ENCODE measurements at regions of chr3 and their contacts with region 1.

Region 1: GRCh38 chr3:101195951-101196713 is 124.2 kb downstream of the IMPG2 start:
- DNase-seq: peak; percentile 23
- H3K4me3 ChIP-seq: no peak overlapping the region
- CTCF ChIP-seq: peak; percentile 37

Region 2: GRCh38 chr3:100776746-100777145 is 419.4 kb before region 1 on chr3:
- CTCF ChIA-PET with region 1: interaction called, 11 read pairs
- POLR2A ChIA-PET with region 1: interaction called, 3 read pairs
- DNase-seq: no peak
- H3K4me3 ChIP-seq: no peak overlapping the region
- CTCF ChIP-seq: no peak

Region 3: DNA sequence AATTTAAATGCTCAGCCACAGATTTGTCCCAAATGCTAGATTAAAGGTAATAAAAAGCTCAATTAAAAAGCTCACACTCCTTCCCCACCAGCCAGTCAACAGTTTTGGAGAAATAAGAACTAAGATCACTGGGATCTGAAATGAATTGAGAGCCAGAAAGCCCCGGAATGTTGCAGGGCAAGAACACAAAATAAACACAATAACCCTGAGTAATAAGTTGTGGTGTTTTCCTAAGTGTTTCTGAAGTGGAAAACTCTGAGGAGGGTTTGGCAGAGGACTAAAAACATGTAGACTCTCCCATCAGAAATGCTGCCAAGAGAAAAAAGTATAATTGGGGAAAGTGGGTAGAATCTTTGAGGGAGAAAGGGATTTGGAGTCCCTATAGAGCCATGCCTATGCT is 330.7 kb before region 1 on chr3:
- CTCF ChIA-PET with region 1: no interaction called
- POLR2A ChIA-PET with region 1: no interaction called
- DNase-seq: no peak
- H3K4me3 ChIP-seq: no peak overlapping the region
- CTCF ChIP-seq: no peak

Region 4: DNA sequence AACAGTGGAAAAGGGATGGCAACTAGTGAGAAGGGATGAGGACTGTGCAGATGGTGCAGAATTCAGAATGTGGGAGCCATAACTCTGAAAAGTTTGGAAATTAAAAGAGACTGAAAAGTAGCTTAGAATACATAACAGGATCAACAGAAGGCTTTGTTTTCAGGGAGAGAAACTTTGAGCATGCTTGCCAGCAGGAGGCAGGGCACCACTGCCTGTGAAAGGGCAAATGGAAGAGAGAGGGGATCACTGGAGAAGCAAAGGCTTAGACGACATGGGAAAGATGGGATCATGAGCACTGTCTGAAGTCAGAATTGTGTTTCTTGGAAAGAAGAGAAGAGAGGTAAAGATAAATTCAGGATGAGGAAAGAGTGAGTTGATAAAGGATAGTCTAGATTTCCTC is 302.5 kb before region 1 on chr3:
- CTCF ChIA-PET with region 1: interaction called, 129 read pairs
- POLR2A ChIA-PET with region 1: interaction called, 3 read pairs
- DNase-seq: no peak
- H3K4me3 ChIP-seq: no peak overlapping the region
- CTCF ChIP-seq: peak; percentile 64

Region 5: GRCh38 chr3:100899440-100900091 is 296.6 kb before region 1 on chr3:
- CTCF ChIA-PET with region 1: interaction called, 129 read pairs
- POLR2A ChIA-PET with region 1: no interaction called
- DNase-seq: no peak
- H3K4me3 ChIP-seq: no peak overlapping the region
- CTCF ChIP-seq: no peak

Region 6: GRCh38 chr3:101229681-101230080 is 33.5 kb after region 1 on chr3:
- CTCF ChIA-PET with region 1: no interaction called
- POLR2A ChIA-PET with region 1: no interaction called
- DNase-seq: no peak
- H3K4me3 ChIP-seq: no peak overlapping the region
- CTCF ChIP-seq: peak; percentile 13

Region 7: GRCh38 chr3:101351829-101352228 is 155.7 kb after region 1 on chr3:
- CTCF ChIA-PET with region 1: no interaction called
- POLR2A ChIA-PET with region 1: no interaction called
- DNase-seq: no peak
- H3K4me3 ChIP-seq: no peak overlapping the region
- CTCF ChIP-seq: no peak

Region 8: GRCh38 chr3:101381809-101382208 is 185.7 kb after region 1 on chr3:
- CTCF ChIA-PET with region 1: interaction called, 10 read pairs
- POLR2A ChIA-PET with region 1: no interaction called
- DNase-seq: no peak
- H3K4me3 ChIP-seq: no peak overlapping the region
- CTCF ChIP-seq: no peak